Activated naive CD4-positive, alpha-beta T cell treated with anti-CD3 and anti-CD28 coated beads, Interleukin-2, amount 10 ng/mL, durations not matched to agents 7 days and 5 days (primary cell): ENCODE measurements at regions of chr5 and their contacts with region 1.

Region 1: GRCh38 chr5:35822511-35822910 is 34.2 kb upstream of the IL7R start:
- DNase-seq: peak; percentile 78
- H3K4me3 Mint-ChIP-seq: peak overlapping the region; percentile 39
- H3K27ac Mint-ChIP-seq: peak overlapping the region; percentile 86
- H3K4me1 Mint-ChIP-seq: peaks cover 88% of the 10 kb centered on the region
- H3K27me3 Mint-ChIP-seq: no peaks in the 10 kb centered on the region

Region 2: DNA sequence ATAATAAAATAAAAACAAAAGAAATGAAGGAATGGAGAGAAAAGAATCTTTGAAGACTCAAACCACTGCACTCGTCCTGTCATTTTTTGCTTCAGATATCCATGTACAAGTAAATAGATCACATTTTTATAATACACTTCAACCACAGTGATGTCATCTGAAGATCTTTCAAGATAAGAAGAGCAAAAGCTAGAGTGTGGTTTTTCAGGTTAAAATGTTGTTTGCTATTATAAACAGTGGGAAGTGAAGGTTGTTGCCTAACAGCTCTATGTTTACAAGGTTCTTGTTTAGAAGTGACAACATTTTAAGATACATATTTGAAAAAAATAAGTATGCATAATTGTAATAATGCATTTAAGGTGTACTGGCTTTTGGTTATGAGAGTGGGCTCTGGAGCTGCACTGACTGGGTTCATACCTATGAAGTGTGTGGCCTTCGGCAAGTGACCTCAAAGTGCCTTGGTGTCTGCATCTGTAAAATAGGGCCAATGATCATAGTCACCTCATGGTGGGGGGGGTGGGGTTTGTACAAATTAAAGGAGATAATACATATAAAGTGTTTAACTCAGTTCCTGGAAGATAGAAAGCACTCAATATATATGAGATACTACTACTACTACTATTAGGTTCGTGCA is 11.3 kb before region 1 on chr5:
- CTCF ChIA-PET with region 1: interaction called, 24 read pairs
- DNase-seq: peak; percentile 69
- H3K4me3 Mint-ChIP-seq: peak overlapping the region; percentile 35
- H3K27ac Mint-ChIP-seq: peak overlapping the region; percentile 92
- H3K4me1 Mint-ChIP-seq: peaks cover 66% of the 10 kb centered on the region
- H3K27me3 Mint-ChIP-seq: no peaks in the 10 kb centered on the region

Region 3: DNA sequence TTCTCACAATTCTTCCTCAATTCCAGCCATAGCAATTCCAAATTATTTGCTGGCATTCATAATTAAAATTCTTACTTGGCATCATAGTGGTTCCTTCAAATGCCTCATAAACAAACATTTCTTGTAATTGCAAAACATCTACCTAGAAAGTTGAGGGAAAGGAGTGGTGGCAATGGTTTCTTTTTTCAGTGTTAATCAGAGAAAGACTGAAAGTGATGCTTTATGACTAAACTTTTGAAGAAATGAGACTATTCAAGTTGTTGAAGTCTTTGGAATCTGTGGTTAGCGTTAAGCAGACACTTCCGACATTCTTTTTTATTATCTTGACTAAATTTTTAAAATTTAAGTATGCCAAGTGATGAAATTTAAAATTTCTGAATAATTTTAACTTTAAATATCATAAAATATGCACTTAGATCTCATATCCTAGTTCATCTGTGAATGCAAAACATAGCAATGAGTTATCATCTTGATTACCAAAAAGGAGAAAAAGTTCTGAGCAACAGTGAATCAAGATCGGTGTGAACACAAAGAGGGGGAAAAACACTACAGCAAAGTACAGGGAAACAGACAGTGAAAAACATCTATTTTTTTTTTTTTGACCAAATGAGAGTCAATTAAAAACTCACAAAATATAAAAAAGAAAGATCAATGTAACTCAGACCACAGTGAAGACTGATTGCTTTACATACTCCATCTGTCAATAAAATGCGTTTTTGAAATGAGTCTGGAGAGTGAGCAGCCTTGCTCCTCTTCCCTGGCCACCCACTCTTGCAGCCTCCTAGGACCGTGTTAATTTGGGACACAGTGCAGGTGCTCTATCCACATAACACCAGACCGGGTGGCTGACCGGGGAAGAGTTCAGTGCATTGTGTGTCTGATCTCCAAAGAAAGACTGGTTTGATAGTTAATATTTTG is 13.5 kb after region 1 on chr5:
- CTCF ChIA-PET with region 1: interaction called, 21 read pairs
- DNase-seq: no peak
- H3K4me3 Mint-ChIP-seq: peak overlapping the region; percentile 35
- H3K27ac Mint-ChIP-seq: peak overlapping the region; percentile 91
- H3K4me1 Mint-ChIP-seq: peaks cover 92% of the 10 kb centered on the region
- H3K27me3 Mint-ChIP-seq: no peaks in the 10 kb centered on the region